Heart left ventricle (tissue), 16 donors: ENCODE measurements at regions of chr2 and their contacts with region 1.

Region 1: DNA sequence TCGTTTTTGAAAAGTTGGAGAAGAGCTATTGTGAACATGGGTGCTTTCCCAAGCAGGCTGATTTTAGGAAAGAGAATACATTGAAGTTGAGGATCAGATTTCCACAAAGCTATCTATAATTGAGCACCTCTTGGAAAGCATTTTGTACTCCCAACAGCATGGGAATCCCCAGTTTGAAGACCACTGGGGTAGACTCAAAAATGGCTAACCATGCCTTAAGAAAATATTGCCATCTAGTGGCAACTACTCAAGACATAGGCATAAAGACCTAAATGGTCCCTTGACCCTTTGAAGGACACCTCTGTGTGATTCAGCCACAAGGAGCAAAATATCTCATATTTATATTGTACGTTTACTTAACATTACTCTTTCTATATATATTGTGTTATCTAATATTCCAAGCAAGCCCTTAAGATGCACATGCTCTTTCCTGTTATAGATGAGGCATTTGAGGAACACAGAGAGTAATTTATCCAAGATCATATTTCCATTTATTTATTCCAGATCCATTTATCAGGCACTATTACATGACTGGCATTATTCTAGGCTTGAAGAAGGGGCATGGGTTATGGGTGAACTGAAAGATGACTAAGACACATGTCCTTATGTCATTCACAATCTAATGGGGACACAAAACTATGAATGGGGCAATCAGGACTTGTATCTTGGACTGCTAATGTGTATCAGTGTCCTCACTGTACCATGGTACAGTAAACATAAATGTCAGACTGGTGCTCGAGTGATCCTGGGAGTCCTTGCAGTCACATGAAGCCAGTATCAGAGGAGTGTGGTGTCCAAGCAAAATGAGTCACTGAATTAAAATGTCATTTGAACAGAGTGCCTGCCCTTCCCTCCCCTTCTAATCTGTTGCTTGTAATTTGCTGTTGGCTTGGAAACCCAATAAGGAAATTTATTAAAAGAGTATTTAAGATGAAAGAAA is 121.0 kb upstream of the XPO1 start:
- DNase-seq: peak in 3 of 5 donors; percentile 20 to 42 (median 31)
- ATAC-seq: peak; percentile 92 to 94 (median 94)
- H3K4me3 ChIP-seq: no peak overlapping the region
- H3K27ac ChIP-seq: peak overlapping the region; percentile 67 to 93 (median 84)
- H3K4me1 ChIP-seq: peaks cover 0 to 27% (median 16%) of the 10 kb centered on the region in 12 donors
- H3K27me3 ChIP-seq: no peaks in the 10 kb centered on the region
- CTCF ChIP-seq: peak; percentile 30 to 61 (median 43)
- POLR2A ChIP-seq: no peak

Region 2: GRCh38 chr2:61707969-61708852 is 49.1 kb after region 1 on chr2:
- intact Hi-C with region 1: no loop called
- DNase-seq: peak in 1 of 5 donors; percentile 69
- ATAC-seq: peak; percentile 95 to 97 (median 95)
- H3K4me3 ChIP-seq: no peak overlapping the region
- H3K27ac ChIP-seq: peak overlapping the region; percentile 55 to 91 (median 69)
- H3K4me1 ChIP-seq: peaks cover 0 to 9% (median 0%) of the 10 kb centered on the region in 12 donors
- H3K27me3 ChIP-seq: no peaks in the 10 kb centered on the region
- CTCF ChIP-seq: no peak
- POLR2A ChIP-seq: peak in 1 of 2 donors; percentile 36

Region 3: GRCh38 chr2:61718965-61719364 is 59.9 kb after region 1 on chr2:
- intact Hi-C with region 1: loop called in 1 of 10 experiments (anchors 2 kb)
- DNase-seq: peak in 4 of 5 donors; percentile 32 to 70 (median 60)
- ATAC-seq: peak; percentile 72 to 94 (median 84)
- H3K4me3 ChIP-seq: no peak overlapping the region
- H3K27ac ChIP-seq: peak overlapping the region in 8 of 12 donors; percentile 15 to 80 (median 62)
- H3K4me1 ChIP-seq: peaks cover 0 to 20% (median 0%) of the 10 kb centered on the region in 12 donors
- H3K27me3 ChIP-seq: no peaks in the 10 kb centered on the region
- CTCF ChIP-seq: no peak
- POLR2A ChIP-seq: no peak